ENCODE measurements at regions of chr18 and their contacts with region 1.

Region 1: DNA sequence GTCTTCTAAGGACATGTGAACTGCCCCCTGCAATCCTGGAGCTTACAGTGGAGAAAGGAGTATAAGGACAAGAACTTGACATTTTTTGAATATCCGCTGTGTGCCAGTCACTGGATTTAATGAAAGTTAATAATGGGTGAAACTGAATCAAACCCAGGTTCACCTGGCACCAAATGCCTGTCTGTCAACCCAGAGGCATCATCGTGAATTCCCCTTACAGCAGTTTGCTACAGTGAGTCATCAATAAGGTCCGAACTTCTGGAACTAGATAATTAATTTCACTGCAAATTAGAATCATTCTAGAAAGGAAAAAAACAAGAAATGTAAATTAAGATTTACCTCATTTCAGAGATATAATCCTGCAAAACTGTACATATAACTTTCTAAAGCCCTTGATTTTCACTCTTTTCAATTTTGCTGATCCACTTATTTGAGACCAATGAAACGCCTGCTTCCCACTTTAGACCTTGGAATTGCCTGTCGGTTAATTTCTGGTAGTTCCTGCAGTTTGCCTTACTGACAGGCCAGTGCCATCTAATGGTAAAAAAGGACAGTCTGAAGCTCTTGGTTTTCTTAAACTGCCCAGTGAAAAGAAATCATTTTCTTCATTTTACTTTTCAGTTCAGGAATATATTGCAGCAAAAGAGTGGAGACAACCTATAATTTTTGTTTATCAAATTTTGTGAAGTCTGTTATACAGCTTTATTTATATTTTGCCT is 8.2 kb downstream of the DSG2 start:
- DNase-seq: no peak
- H3K4me3 Mint-ChIP-seq: no peak overlapping the region
- H3K27ac Mint-ChIP-seq: no peak overlapping the region
- H3K4me1 Mint-ChIP-seq: peaks cover 37% of the 10 kb centered on the region
- H3K27me3 Mint-ChIP-seq: no peaks in the 10 kb centered on the region
- CTCF ChIP-seq: peak; percentile 20

Region 2: DNA sequence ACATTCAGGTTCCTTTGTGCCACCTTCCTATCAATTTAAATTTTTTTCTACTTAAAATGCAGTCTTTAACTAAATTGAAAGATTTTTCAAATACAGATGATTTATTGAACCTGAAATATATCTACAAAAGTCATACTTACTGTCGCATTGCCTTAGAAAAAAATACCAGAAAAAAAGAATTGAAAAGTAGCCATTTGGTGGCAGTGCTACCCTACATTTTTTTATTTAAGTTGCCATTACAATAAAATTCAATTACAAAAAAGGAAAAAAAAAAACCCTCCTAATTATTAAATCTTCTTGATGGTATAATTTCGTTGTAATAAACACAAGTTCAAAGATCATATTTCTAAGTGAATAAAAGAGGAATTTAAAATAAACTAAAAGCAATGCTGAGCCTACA is 507.0 kb before region 1 on chr18:
- CTCF ChIA-PET with region 1: no interaction called
- intact Hi-C with region 1: loop called (anchors 2 kb)
- DNase-seq: no peak
- H3K4me3 Mint-ChIP-seq: no peak overlapping the region
- H3K27ac Mint-ChIP-seq: no peak overlapping the region
- H3K4me1 Mint-ChIP-seq: peaks cover 10% of the 10 kb centered on the region
- H3K27me3 Mint-ChIP-seq: no peaks in the 10 kb centered on the region
- CTCF ChIP-seq: no peak